ENCODE measurements at regions of chr1 and their contacts with region 1.

Region 1: DNA sequence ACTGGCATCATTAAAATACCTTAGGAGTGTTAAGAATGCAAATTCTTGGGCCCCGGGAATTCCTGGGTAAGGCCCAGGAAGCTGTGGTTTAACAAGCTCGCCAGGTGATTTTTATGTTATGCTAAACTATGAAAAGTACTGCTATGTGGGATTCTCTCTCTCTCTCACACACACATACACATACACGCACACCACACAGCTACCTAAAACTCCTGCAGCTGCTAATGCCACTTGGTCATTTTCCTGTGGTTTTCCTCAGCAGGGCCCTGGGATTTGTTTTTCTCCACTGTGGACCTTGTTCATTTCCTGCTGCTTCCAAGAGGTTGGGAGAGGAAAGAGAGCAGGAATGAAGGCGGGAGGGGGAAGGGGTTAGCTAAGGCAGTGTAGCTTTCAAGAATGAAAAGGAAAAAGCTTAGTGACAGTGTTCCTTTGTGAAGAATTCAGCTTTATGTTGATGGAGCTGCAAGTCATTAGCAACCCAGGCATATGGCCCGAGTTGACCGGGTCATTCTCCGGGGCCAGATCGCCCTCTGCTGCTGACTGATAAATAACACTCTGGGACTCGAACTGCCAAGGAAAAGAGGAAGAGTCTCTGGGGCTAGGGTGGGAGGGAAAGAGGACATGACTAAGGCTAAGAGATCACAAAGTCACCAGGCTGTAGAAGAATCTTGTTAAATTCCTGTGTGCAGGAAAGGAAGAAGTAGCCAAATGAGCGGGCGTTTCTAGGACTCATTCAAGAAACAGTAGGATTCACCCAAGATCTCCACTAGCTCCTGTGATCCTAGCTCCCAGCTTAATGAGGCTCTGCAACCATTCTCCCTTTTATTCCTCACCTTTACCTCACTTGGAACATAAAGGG is 30.5 kb upstream of the LRIG2 start:
- DNase-seq: peak; percentile 73
- H3K4me3 ChIP-seq: no peak overlapping the region
- H3K4me3 Mint-ChIP-seq: no peak overlapping the region
- H3K27ac Mint-ChIP-seq: peak overlapping the region; percentile 81
- H3K4me1 ChIP-seq: peaks cover 49% of the 10 kb centered on the region
- H3K4me1 Mint-ChIP-seq: peaks cover 31% of the 10 kb centered on the region
- H3K27me3 ChIP-seq: no peaks in the 10 kb centered on the region
- H3K27me3 Mint-ChIP-seq: no peaks in the 10 kb centered on the region
- CTCF ChIP-seq: peak; percentile 22 to 46

Region 2: GRCh38 chr1:112809253-112809684 is 233.2 kb before region 1 on chr1:
- CTCF ChIA-PET with region 1: no interaction called
- POLR2A ChIA-PET with region 1: no interaction called
- intact Hi-C with region 1: loop called (anchors 1 kb)
- DNase-seq: peak; percentile 79 to 84
- H3K4me3 ChIP-seq: no peak overlapping the region
- H3K4me3 Mint-ChIP-seq: no peak overlapping the region
- H3K27ac Mint-ChIP-seq: peak overlapping the region; percentile 59
- H3K4me1 ChIP-seq: peaks cover 52% of the 10 kb centered on the region
- H3K4me1 Mint-ChIP-seq: peaks cover 48% of the 10 kb centered on the region
- H3K27me3 ChIP-seq: no peaks in the 10 kb centered on the region
- H3K27me3 Mint-ChIP-seq: no peaks in the 10 kb centered on the region
- CTCF ChIP-seq: peak; percentile 65 to 77

Region 3: GRCh38 chr1:112955781-112956543 is 86.6 kb before region 1 on chr1 and contains the start of gene SLC16A1:
- CTCF ChIA-PET with region 1: interaction called, 14 read pairs
- POLR2A ChIA-PET with region 1: interaction called, 6 read pairs
- intact Hi-C with region 1: loop called (anchors 1 kb)
- DNase-seq: peak; percentile 90 to 92
- H3K4me3 ChIP-seq: peak within 1 kb of the TSS; percentile 69
- H3K4me3 Mint-ChIP-seq: peak within 1 kb of the TSS; percentile 89
- H3K27ac Mint-ChIP-seq: peak within 1 kb of the TSS; percentile 87
- H3K4me1 ChIP-seq: peaks cover 24% of the 10 kb centered on the region
- H3K4me1 Mint-ChIP-seq: peaks cover 20% of the 10 kb centered on the region
- H3K27me3 ChIP-seq: no peaks in the 10 kb centered on the region
- H3K27me3 Mint-ChIP-seq: no peaks in the 10 kb centered on the region
- CTCF ChIP-seq: no peak
- total RNA-seq, gene SLC16A1: 104 and 107 TPM in 2 replicates

Region 4: DNA sequence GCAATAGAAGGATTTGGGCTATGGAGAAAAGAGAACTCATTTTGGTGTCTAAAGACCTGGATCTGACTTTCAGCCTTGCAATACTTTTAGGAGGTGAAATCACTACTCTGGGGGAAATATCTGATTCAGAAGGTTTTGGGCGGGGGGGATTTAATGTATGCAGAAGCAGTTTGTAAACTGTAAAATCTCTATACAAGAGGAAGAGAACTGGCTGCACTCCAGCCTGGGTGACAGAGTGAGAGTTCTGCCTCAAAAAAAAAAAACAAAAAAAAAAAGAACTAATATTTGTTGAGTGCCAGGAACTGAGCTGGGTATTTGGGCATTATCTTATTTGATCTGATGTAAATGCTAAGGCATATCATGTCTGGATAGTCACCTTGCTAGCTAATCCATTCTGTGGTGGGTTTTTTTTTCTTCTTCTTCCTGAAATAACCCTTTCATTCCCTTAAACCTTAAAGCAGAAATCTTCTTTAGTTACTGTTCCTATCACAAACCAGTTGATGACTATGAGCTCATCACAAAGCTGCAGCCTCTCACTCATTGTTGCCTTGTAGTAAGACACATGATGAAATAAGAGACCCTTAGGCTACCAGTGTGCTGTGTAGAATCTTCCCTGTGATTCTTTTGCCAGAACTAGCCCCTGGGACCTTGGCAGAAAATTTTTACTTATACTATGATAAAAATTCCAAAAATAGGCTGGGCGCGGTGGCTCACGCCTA is 51.0 kb before region 1 on chr1:
- CTCF ChIA-PET with region 1: no interaction called
- POLR2A ChIA-PET with region 1: no interaction called
- intact Hi-C with region 1: no loop called
- DNase-seq: no peak
- H3K4me3 ChIP-seq: no peak overlapping the region
- H3K4me3 Mint-ChIP-seq: no peak overlapping the region
- H3K27ac Mint-ChIP-seq: no peak overlapping the region
- H3K4me1 ChIP-seq: no peaks in the 10 kb centered on the region
- H3K4me1 Mint-ChIP-seq: no peaks in the 10 kb centered on the region
- H3K27me3 ChIP-seq: no peaks in the 10 kb centered on the region
- H3K27me3 Mint-ChIP-seq: no peaks in the 10 kb centered on the region
- CTCF ChIP-seq: no peak

Region 5: GRCh38 chr1:113021430-113022086 is 21.0 kb before region 1 on chr1:
- CTCF ChIA-PET with region 1: interaction called, 3 read pairs
- POLR2A ChIA-PET with region 1: no interaction called
- intact Hi-C with region 1: loop called (anchors 1 kb)
- DNase-seq: peak; percentile 46 to 54
- H3K4me3 ChIP-seq: no peak overlapping the region
- H3K4me3 Mint-ChIP-seq: peak overlapping the region; percentile 18
- H3K27ac Mint-ChIP-seq: peak overlapping the region; percentile 64
- H3K4me1 ChIP-seq: peaks cover 8% of the 10 kb centered on the region
- H3K4me1 Mint-ChIP-seq: peaks cover 11% of the 10 kb centered on the region
- H3K27me3 ChIP-seq: no peaks in the 10 kb centered on the region
- H3K27me3 Mint-ChIP-seq: no peaks in the 10 kb centered on the region
- CTCF ChIP-seq: no peak

Region 6: GRCh38 chr1:113086541-113086940 is 44.0 kb after region 1 on chr1:
- CTCF ChIA-PET with region 1: interaction called, 10 read pairs
- POLR2A ChIA-PET with region 1: no interaction called
- intact Hi-C with region 1: no loop called
- DNase-seq: no peak
- H3K4me3 ChIP-seq: no peak overlapping the region
- H3K4me3 Mint-ChIP-seq: no peak overlapping the region
- H3K27ac Mint-ChIP-seq: no peak overlapping the region
- H3K4me1 ChIP-seq: no peaks in the 10 kb centered on the region
- H3K4me1 Mint-ChIP-seq: no peaks in the 10 kb centered on the region
- H3K27me3 ChIP-seq: no peaks in the 10 kb centered on the region
- H3K27me3 Mint-ChIP-seq: no peaks in the 10 kb centered on the region
- CTCF ChIP-seq: no peak